Astrocyte of the cerebellum (primary cell): ENCODE measurements at regions of chr15 and their contacts with region 1.

Region 1: GRCh38 chr15:71526060-71526820 is 284.1 kb upstream of the NR2E3 start:
- DNase-seq: peak; percentile 43
- H3K4me3 ChIP-seq: no peak overlapping the region
- CTCF ChIP-seq: no peak

Region 2: GRCh38 chr15:70936326-70936725 is 589.9 kb before region 1 on chr15:
- in situ Hi-C with region 1: no loop called
- DNase-seq: no peak
- H3K4me3 ChIP-seq: no peak overlapping the region
- CTCF ChIP-seq: no peak

Region 3: GRCh38 chr15:71252044-71252906 is 274.0 kb before region 1 on chr15:
- in situ Hi-C with region 1: no loop called
- DNase-seq: no peak
- H3K4me3 ChIP-seq: no peak overlapping the region
- CTCF ChIP-seq: no peak

Region 4: GRCh38 chr15:71494563-71495397 is 31.5 kb before region 1 on chr15:
- in situ Hi-C with region 1: loop called (anchors 5 kb)
- DNase-seq: no peak
- H3K4me3 ChIP-seq: no peak overlapping the region
- CTCF ChIP-seq: no peak

Region 5: DNA sequence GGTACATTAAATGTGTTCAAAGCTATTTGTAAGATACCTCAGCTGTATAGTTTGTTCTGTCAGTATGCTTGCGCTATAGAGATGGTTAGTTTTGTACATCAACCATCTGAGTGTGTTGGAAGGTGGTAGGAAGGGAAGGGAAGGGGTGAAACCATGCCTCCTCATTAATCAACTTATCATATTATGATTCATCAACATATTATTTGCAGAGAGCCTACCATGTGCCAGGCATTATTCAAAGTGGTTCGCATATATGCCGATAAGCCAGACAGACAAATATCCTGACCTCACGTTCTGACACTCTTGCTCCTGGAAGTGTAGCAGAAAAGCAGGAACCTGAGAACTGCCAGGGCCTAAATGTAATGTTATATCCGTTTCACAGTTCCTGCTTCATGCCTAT is 36.0 kb after region 1 on chr15:
- in situ Hi-C with region 1: loop called (anchors 5 kb)
- DNase-seq: no peak
- H3K4me3 ChIP-seq: no peak overlapping the region
- CTCF ChIP-seq: no peak